HepG2 (cell line): ENCODE measurements at regions of chr3 and their contacts with region 1.

Region 1: DNA sequence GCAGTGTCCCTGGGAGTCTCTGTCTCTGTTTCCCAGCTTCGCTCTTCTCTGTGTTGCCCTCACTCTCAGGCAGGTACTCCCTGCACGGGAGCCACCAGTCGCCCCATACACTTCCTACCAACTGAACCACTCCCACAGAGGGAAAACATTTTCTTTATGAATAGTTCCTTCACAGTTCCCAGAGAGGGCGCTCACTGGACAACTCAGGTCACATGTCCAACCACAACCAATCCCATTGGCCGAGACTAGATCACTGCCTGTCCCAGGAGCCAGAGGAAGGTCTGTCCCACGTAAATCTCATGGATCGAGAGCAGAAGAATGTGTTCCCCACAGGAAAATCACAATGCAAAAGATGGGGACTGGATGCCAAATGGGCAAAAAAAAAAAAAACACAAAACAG is 26.1 kb downstream of the GRK7 start:
- DNase-seq: peak; percentile 19
- ATAC-seq: peak; percentile 78
- H3K4me3 ChIP-seq: no peak overlapping the region
- H3K27ac ChIP-seq: no peak overlapping the region
- H3K4me1 ChIP-seq: peaks cover 9% of the 10 kb centered on the region; the same call in 1 of the 2 replicates
- H3K27me3 ChIP-seq: no peaks in the 10 kb centered on the region
- CTCF ChIP-seq: no peak
- EP300 ChIP-seq: no peak
- POLR2A ChIP-seq: no peak
- RAD21 ChIP-seq: no peak

Region 2: DNA sequence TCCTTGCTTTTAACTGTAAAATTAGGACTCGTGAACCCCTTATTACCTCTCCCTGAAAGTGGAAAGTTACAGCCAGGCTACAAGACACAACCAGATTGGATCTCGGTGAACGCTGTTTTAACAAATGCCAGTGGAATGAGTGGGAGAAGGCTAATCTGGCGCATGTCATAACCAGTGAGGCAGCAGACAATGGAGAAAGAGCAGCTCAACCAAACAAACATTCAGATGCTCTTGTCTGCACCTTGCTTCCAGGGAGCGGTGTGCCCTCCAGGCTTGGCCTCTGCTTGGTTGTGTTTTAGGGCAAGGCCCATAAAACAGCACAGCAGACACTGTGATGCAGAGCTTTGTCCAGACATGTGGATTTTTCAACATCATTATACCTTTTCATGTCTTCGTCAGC is 41.2 kb after region 1 on chr3:
- CTCF ChIA-PET with region 1: no interaction called
- POLR2A ChIA-PET with region 1: no interaction called
- in situ Hi-C with region 1: no loop called
- intact Hi-C with region 1: loop called (anchors 5 kb)
- DNase-seq: no peak
- ATAC-seq: no peak
- H3K4me3 ChIP-seq: no peak overlapping the region
- H3K27ac ChIP-seq: no peak overlapping the region
- H3K4me1 ChIP-seq: no peaks in the 10 kb centered on the region
- H3K27me3 ChIP-seq: peaks cover 0 to 8% of the 10 kb centered on the region in 2 experiments; a peak in 1 of 5 replicates
- CTCF ChIP-seq: no peak
- EP300 ChIP-seq: no peak
- POLR2A ChIP-seq: no peak
- RAD21 ChIP-seq: no peak